GM13977 (cell line): ENCODE measurements at regions of chr12 and their contacts with region 1.

Region 1: GRCh38 chr12:53701518-53702260 is 25.6 kb downstream of the CALCOCO1 start:
- DNase-seq: peak; percentile 76
- CTCF ChIP-seq: peak; percentile 98

Region 2: DNA sequence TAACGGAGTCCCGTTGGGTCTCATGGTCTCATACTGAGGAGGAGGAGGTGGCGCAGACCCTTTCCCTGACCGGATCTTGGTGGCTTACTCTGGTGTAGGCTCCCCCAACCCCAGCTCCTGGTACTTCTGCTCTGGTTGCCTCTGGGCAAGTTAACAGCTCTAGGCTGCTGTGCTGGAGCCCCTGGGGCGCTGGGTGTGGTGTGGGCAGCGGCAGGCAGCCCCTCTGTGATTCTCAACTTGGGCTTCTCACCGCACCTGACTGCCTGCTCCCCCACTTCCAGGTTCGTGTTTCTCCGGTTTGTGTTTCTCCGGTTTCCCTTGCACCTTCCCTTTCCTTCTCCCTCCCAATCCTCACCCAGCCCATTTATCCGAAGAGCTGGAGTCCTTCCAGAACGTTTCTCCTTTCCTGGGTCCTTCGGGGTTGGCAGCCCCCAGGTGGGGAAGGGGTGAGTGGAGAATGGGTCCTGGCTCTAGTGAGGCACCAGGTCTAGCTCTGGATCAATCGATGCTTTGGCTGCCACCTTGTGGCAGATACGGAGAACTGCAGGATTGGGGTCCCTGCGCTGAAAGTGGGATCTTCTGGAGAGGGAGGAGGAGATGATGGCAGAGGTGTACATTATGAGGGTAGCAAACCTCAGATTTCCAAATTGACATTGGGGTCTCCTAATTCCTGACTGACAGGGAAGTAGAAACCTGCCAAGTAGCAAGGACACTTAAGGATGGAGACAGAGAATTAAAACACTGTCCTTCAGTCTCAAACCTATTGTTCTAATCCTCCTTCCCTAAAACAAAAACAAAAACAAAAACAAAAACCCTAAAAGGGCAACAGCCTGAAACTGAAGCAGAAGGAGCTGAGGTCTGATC is 41.8 kb after region 1 on chr12:
- in situ Hi-C with region 1: loop called (anchors 5 kb)
- DNase-seq: peak; percentile 81
- CTCF ChIP-seq: peak; percentile 96